ENCODE measurements at regions of chr5 and their contacts with region 1.

Region 1: GRCh38 chr5:91361055-91361701 is 21.9 kb downstream of the ARRDC3 start:
- DNase-seq: peak in 3 of 14 experiments; percentile 8 to 56 (median 38)
- ATAC-seq: peak; percentile 46
- H3K4me3 ChIP-seq: no peak overlapping the region
- H3K4me3 Mint-ChIP-seq: no peak overlapping the region
- H3K27ac ChIP-seq: no peak overlapping the region
- H3K27ac Mint-ChIP-seq: peak overlapping the region; percentile 43
- H3K4me1 ChIP-seq: no peaks in the 10 kb centered on the region
- H3K4me1 Mint-ChIP-seq: peaks cover 10% of the 10 kb centered on the region
- H3K27me3 ChIP-seq: no peaks in the 10 kb centered on the region
- H3K27me3 Mint-ChIP-seq: no peaks in the 10 kb centered on the region
- CTCF ChIP-seq: no peak

Region 2: GRCh38 chr5:90446961-90447360 is 914.2 kb before region 1 on chr5:
- CTCF ChIA-PET with region 1: no interaction called
- POLR2A ChIA-PET with region 1: no interaction called
- intact Hi-C with region 1: no loop called
- DNase-seq: no peak
- ATAC-seq: no peak
- H3K4me3 ChIP-seq: no peak overlapping the region
- H3K4me3 Mint-ChIP-seq: no peak overlapping the region
- H3K27ac ChIP-seq: no peak overlapping the region
- H3K27ac Mint-ChIP-seq: no peak overlapping the region
- H3K4me1 ChIP-seq: no peaks in the 10 kb centered on the region
- H3K4me1 Mint-ChIP-seq: no peaks in the 10 kb centered on the region
- H3K27me3 ChIP-seq: no peaks in the 10 kb centered on the region
- H3K27me3 Mint-ChIP-seq: no peaks in the 10 kb centered on the region
- CTCF ChIP-seq: no peak

Region 3: GRCh38 chr5:90932052-90932699 is 429.0 kb before region 1 on chr5:
- CTCF ChIA-PET with region 1: no interaction called
- POLR2A ChIA-PET with region 1: no interaction called
- intact Hi-C with region 1: no loop called
- DNase-seq: peak in 7 of 14 experiments; percentile 1 to 62 (median 44)
- ATAC-seq: no peak
- H3K4me3 ChIP-seq: no peak overlapping the region
- H3K4me3 Mint-ChIP-seq: no peak overlapping the region
- H3K27ac ChIP-seq: no peak overlapping the region
- H3K27ac Mint-ChIP-seq: no peak overlapping the region
- H3K4me1 ChIP-seq: no peaks in the 10 kb centered on the region
- H3K4me1 Mint-ChIP-seq: no peaks in the 10 kb centered on the region
- H3K27me3 ChIP-seq: peaks cover 0 to 5% of the 10 kb centered on the region in 2 experiments
- H3K27me3 Mint-ChIP-seq: no peaks in the 10 kb centered on the region
- CTCF ChIP-seq: peak; percentile 62

Region 4: GRCh38 chr5:91280362-91281269 is 80.6 kb before region 1 on chr5:
- CTCF ChIA-PET with region 1: no interaction called
- POLR2A ChIA-PET with region 1: no interaction called
- intact Hi-C with region 1: loop called in 1 of 2 experiments (anchors 5 kb)
- DNase-seq: peak; percentile 65 to 95 (median 79)
- ATAC-seq: peak; percentile 84
- H3K4me3 ChIP-seq: peak overlapping the region; percentile 63
- H3K4me3 Mint-ChIP-seq: peak overlapping the region; percentile 90
- H3K27ac ChIP-seq: peak overlapping the region in 1 of 2 donors; percentile 14
- H3K27ac Mint-ChIP-seq: peak overlapping the region; percentile 79
- H3K4me1 ChIP-seq: peaks cover 19% of the 10 kb centered on the region
- H3K4me1 Mint-ChIP-seq: peaks cover 23% of the 10 kb centered on the region
- H3K27me3 ChIP-seq: no peaks in the 10 kb centered on the region
- H3K27me3 Mint-ChIP-seq: no peaks in the 10 kb centered on the region
- CTCF ChIP-seq: no peak

Region 5: GRCh38 chr5:91318724-91319123 is 42.5 kb before region 1 on chr5:
- CTCF ChIA-PET with region 1: no interaction called
- POLR2A ChIA-PET with region 1: no interaction called
- intact Hi-C with region 1: loop called in 1 of 2 experiments (anchors 5 kb)
- DNase-seq: peak in 7 of 14 experiments; percentile 10 to 63 (median 40)
- ATAC-seq: no peak
- H3K4me3 ChIP-seq: no peak overlapping the region
- H3K4me3 Mint-ChIP-seq: no peak overlapping the region
- H3K27ac ChIP-seq: no peak overlapping the region
- H3K27ac Mint-ChIP-seq: no peak overlapping the region
- H3K4me1 ChIP-seq: peaks cover 21% of the 10 kb centered on the region
- H3K4me1 Mint-ChIP-seq: peaks cover 22% of the 10 kb centered on the region
- H3K27me3 ChIP-seq: no peaks in the 10 kb centered on the region
- H3K27me3 Mint-ChIP-seq: no peaks in the 10 kb centered on the region
- CTCF ChIP-seq: no peak